Activated CD4-positive, alpha-beta T cell treated with anti-CD3 and anti-CD28 coated beads for 36 hours (primary cell): ENCODE measurements at regions of chr3 and their contacts with region 1.

Region 1: DNA sequence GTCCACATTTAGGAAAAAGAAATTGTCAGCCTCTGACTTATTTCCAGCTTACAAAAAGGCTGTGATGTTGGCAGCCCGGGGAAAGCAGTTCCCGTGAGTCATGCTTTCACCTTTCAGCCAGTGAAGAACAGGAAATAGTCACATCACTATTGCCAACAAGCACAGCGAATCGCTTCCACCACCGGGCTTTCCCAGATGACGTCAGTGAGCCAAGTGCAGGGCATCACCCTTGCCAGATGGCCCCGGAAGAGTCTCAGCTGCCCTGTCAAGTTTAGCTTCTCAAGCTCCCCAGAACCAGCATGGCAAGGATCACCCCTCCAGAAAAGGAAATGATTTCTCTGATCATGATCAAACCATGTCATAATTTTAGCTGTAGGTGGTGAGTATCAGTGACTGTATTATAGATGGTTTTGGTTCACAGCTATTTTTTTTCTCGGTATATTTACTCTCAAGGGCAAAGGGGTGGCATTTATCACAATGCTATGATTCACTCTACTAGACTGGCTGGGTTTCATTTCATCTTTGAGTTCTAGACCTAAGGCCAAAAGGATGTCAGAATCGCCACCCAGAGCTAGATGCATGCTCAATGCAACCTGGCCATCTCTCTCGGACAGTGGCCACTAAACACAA is 32.9 kb downstream of the B3GNT5 start:
- DNase-seq: peak; percentile 97
- ATAC-seq: peak; percentile 93
- H3K4me3 Mint-ChIP-seq: peak overlapping the region; percentile 56
- H3K27ac Mint-ChIP-seq: peak overlapping the region; percentile 98
- H3K4me1 Mint-ChIP-seq: peaks cover 43% of the 10 kb centered on the region
- H3K27me3 Mint-ChIP-seq: no peaks in the 10 kb centered on the region

Region 2: DNA sequence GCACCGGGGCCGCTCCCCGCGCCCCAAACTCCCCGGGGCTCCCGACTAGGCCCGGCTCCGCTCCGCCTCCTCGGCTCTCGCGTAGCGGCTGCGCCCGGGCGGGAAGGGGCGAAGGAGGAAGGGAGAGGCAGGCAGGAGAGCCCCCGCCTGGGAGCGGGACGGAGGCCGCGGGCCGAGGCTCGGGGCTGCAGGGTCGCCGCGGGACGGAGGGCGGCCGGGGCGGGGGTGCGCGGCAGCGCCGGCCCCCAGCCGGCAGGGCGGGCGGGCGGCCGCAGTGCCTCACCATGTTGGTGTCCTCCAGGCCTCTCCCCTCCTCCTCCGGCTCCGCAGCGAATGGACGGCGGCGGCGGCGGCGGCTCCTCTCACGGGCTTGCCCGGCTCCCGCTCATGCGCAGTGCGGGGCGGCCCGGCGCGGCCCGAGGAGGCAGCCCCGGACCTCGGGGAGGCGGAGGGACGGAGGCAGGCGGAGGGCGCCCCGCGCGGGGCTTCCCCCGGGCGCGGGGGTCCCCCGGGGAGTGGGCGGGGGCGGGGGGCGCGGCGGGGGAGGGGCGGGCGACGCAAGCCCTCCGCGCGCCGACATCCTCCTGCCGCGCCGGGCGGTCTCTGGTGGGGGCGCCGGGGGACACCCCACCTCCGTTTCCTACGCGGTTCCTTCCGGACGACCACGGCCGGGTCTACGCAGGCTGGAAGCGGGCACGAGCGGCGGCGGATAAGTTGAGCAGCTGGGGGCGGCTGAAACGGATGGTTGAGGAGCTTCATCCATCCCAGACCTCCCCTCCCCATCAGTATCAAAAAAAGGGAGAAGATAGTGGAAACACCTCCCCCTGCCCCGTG is 305.5 kb before region 1 on chr3 and contains the start of gene DCUN1D1:
- CTCF ChIA-PET with region 1: no interaction called
- POLR2A ChIA-PET with region 1: no interaction called
- intact Hi-C with region 1: loop called in 1 of 2 experiments (anchors 10 kb)
- DNase-seq: peak; percentile 93
- ATAC-seq: peak; percentile 94
- H3K4me3 Mint-ChIP-seq: peak within 1 kb of the TSS; percentile 95
- H3K27ac Mint-ChIP-seq: peak within 1 kb of the TSS; percentile 92
- H3K4me1 Mint-ChIP-seq: peaks cover 25% of the 10 kb centered on the region
- H3K27me3 Mint-ChIP-seq: no peaks in the 10 kb centered on the region
- total RNA-seq, gene DCUN1D1: 40.0 to 52.9 TPM

Region 3: GRCh38 chr3:183033746-183034145 is 252.2 kb before region 1 on chr3:
- CTCF ChIA-PET with region 1: no interaction called
- POLR2A ChIA-PET with region 1: no interaction called
- intact Hi-C with region 1: no loop called
- DNase-seq: no peak
- ATAC-seq: no peak
- H3K4me3 Mint-ChIP-seq: no peak overlapping the region
- H3K27ac Mint-ChIP-seq: no peak overlapping the region
- H3K4me1 Mint-ChIP-seq: no peaks in the 10 kb centered on the region
- H3K27me3 Mint-ChIP-seq: no peaks in the 10 kb centered on the region

Region 4: GRCh38 chr3:183224180-183224970 is 61.6 kb before region 1 on chr3:
- CTCF ChIA-PET with region 1: interaction called, 4 read pairs
- POLR2A ChIA-PET with region 1: interaction called, 5 read pairs
- intact Hi-C with region 1: loop called in 1 of 2 experiments (anchors 2 kb)
- DNase-seq: peak; percentile 71
- ATAC-seq: peak; percentile 96
- H3K4me3 Mint-ChIP-seq: peak overlapping the region; percentile 52
- H3K27ac Mint-ChIP-seq: peak overlapping the region; percentile 77
- H3K4me1 Mint-ChIP-seq: peaks cover 36% of the 10 kb centered on the region
- H3K27me3 Mint-ChIP-seq: no peaks in the 10 kb centered on the region

Region 5: DNA sequence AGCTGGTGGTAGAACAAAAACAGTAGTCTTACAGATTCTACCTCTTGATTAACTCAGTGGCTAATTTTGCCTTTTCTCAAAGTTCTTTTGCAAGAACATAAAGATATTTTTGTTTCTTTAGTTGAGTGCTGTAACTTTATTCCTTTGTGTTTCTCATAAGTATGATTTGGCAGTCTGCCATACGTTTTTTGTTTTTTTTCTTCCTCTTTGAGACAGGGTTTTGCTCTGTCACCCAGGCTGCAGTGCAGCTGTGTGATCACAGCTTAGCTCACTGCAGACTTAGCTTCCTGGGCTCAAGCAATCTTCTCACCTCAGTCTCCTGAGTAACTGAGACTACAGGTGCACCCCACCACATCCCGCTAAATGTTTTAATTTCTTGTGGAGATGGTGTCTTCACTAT is 10.5 kb before region 1 on chr3:
- CTCF ChIA-PET with region 1: interaction called, 12 read pairs
- POLR2A ChIA-PET with region 1: interaction called, 11 read pairs
- intact Hi-C with region 1: no loop called
- DNase-seq: no peak
- ATAC-seq: peak; percentile 60
- H3K4me3 Mint-ChIP-seq: no peak overlapping the region
- H3K27ac Mint-ChIP-seq: no peak overlapping the region
- H3K4me1 Mint-ChIP-seq: peaks cover 30% of the 10 kb centered on the region
- H3K27me3 Mint-ChIP-seq: no peaks in the 10 kb centered on the region

Region 6: GRCh38 chr3:183377307-183377959 is 91.5 kb after region 1 on chr3:
- CTCF ChIA-PET with region 1: interaction called, 18 read pairs
- POLR2A ChIA-PET with region 1: no interaction called
- intact Hi-C with region 1: loop called (anchors 1 to 5 kb)
- DNase-seq: peak; percentile 24
- ATAC-seq: peak; percentile 77
- H3K4me3 Mint-ChIP-seq: no peak overlapping the region
- H3K27ac Mint-ChIP-seq: peak overlapping the region; percentile 58
- H3K4me1 Mint-ChIP-seq: peaks cover 43% of the 10 kb centered on the region
- H3K27me3 Mint-ChIP-seq: no peaks in the 10 kb centered on the region

Region 7: DNA sequence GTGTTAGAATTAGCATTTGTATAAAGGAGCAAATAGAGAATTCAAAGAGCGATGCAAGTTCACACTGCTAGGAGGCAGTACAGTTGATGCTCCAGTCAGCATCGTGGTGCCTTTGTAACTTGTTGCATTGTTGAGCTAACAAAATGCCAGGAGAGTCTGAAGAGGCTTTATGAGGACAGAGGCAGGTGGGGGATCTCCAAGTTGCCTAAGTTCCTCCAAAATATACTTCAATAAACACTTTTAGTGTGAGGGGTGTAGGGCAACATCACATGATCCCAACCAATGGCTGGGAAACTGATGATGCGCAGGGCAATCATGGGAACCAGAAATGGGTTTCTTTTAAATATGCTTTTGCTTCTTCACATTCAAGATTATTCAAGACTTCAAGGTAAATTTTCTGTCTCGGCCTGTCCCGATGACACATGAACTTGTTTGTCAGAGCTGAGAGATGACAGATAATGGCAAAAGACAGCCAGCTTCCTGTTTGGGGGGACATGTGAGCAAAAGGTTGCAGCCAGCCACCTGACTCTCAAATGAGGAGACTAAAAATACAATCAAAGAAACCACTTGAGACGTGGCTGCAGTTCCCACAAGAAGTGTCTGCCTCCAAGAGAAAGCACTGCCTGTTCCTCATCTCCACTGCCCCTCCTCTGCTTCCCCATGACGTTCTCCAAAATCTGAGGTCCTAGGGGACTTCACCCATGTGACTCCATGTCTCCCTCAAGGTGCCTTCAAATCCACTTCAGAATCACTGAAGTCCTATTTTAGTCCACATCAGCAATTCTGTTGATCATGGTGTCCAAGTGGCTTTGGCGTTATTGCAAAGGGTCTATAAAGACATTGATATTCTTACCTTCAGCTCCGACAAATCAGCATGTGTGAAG is 230.3 kb after region 1 on chr3:
- CTCF ChIA-PET with region 1: no interaction called
- POLR2A ChIA-PET with region 1: no interaction called
- intact Hi-C with region 1: loop called in 1 of 2 experiments (anchors 1 kb)
- DNase-seq: peak; percentile 72
- ATAC-seq: peak; percentile 81
- H3K4me3 Mint-ChIP-seq: no peak overlapping the region
- H3K27ac Mint-ChIP-seq: peak overlapping the region; percentile 81
- H3K4me1 Mint-ChIP-seq: peaks cover 83% of the 10 kb centered on the region
- H3K27me3 Mint-ChIP-seq: no peaks in the 10 kb centered on the region